Right ventricle myocardium superior (tissue), 1 donor: ENCODE measurements at regions of chrX and their contacts with region 1.

Region 1: GRCh38 chrX:53071604-53072417 is 10.4 kb upstream of the TSPYL2 start:
- DNase-seq: peak; percentile 77
- ATAC-seq: peak; percentile 90

Region 2: GRCh38 chrX:52280812-52281211 is 791.0 kb before region 1 on chrX:
- intact Hi-C with region 1: no loop called
- DNase-seq: no peak
- ATAC-seq: no peak

Region 3: DNA sequence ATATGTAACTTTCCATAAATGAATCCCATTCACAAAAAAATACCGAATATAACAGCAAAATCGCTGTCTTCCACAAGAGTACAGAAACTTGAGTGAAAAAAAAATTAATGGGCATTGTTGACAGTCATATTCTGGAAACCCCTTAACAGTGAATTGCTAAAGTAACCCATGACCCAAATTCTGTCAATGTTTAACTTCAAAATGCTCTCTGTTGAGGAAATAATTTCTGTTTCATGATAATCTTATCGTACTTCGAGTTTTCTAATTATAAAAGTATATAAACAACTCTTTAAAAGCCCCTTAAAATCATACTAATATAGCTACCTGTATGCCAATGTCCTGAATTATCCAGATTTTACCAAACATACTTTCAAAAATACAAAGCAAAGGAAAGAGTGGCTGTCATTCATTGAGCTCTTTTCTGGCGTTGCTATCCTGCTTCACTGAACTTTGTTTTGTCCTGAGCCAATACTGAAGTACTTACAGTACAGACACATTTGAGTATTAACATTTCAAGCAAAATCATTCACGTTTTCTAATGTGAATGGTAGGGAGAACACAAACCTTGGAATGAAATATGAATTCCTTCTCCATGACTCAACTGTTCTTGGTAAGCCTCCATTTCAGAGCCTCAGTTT is 206.3 kb before region 1 on chrX:
- intact Hi-C with region 1: no loop called
- DNase-seq: no peak
- ATAC-seq: no peak

Region 4: GRCh38 chrX:53224860-53225797 is 153.3 kb after region 1 on chrX and contains the start of gene KDM5C:
- intact Hi-C with region 1: loop called (anchors 5 kb)
- DNase-seq: peak; percentile 92
- ATAC-seq: peak; percentile 95
- total RNA-seq, gene KDM5C: 26.8 TPM